Left colon (tissue), 2 donors: ENCODE measurements at regions of chr1 and their contacts with region 1.

Region 1: DNA sequence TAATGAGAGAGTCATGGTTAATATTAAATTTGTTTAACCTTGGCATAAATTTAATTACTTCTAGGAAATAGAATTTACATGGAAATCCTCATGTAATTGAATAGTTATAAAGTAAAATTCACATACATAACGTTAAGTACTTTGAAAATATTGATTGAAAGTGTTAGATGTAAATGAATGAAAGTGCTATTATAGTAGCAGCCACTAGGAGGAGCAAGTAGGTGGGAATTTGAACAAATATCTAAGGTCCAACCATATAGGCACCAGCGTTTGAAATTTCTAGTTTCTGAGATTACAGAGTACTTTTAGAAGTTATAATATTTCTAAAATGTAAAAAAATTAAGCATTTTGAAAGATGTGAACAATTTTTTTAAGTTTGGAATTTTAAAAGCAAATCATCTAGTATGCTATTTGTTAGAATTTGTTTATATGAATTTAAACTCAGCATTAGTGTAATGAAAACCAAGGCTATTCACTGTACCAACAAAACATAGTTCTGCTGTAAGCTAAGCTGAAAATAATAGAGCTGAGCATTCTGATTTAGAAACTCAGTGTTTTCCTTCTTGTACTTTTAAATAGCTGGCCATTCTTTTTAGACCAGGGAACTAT is 3.3 kb downstream of the B3GALT2 start:
- DNase-seq: no peak
- ATAC-seq: peak; percentile 55

Region 2: GRCh38 chr1:193069748-193070385 is 113.3 kb before region 1 on chr1:
- intact Hi-C with region 1: no loop called
- DNase-seq: no peak
- ATAC-seq: no peak

Region 3: DNA sequence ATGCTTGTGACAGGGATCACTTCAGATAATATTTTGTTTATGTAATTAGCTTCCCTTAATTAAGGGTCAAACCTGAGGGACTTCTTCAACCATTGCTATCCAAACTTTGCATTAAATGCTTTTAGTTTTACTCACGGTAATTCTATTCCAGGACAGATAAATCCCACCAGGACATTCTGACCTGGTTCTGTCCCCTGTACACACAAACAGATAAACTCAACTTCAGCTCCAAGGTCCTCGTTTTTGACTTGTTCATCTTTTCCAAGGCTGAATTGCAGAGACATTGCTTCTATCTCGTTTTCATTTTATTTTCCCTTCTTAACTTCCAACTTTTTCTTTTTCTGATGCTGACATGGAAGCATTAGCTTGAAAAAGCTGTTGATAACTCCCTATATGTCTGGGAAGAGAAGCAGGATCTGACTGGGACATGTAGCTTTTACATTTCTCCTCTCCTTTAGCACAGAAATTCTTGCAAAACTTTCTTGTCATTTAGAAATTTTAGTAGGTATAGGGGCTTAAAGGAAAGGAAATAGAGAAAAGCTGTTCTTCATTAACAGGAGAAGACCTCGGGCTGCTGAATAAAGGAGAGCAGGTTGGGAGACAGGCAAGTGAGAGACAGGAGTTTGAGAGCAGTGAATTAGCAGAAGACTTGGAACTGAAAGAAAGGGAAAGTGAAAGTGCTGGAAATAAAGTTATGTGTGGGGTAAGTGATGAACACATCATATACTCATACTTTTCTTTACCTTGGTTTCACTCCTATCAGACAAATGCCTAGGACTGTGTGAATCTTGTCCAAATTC is 235.0 kb after region 1 on chr1:
- intact Hi-C with region 1: loop called in 1 of 2 experiments (anchors 10 kb)
- DNase-seq: no peak
- ATAC-seq: peak; percentile 92